ENCODE measurements at regions of chr14 and their contacts with region 1.

Region 1: DNA sequence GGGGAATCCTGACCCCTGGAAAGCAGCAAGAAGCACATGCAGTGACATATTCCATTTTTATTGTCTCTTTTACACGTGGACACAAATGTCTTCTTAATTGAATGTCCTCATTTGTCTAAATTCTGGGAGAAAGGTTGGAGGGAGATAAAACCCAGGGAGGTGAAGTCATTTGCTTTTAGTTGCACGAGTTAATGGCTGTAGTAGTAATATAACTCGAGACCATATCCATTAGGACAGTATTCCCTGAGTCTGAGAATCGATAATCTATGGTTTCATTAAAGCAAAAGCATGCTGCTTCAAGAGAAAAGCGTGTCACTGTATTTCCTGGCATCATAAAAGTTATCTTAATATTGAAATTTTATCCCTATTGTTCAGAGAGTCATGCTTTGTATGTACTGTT is 216.0 kb upstream of the PELI2 start:
- DNase-seq: no peak
- ATAC-seq: no peak

Region 2: GRCh38 chr14:55951341-55952206 is 49.3 kb after region 1 on chr14:
- intact Hi-C with region 1: loop called (anchors 1 kb)
- DNase-seq: no peak
- ATAC-seq: no peak

Measured in sciatic nerve (tissue), 2 donors.